Transverse colon (tissue), 4 donors: ENCODE measurements at regions of chr1 and their contacts with region 1.

Region 1: GRCh38 chr1:84763912-84764663 is 73.8 kb upstream of the SSX2IP start:
- DNase-seq: no peak
- H3K4me3 ChIP-seq: no peak overlapping the region
- H3K27ac ChIP-seq: no peak overlapping the region
- H3K4me1 ChIP-seq: peaks cover 0 to 3% (median 0%) of the 10 kb centered on the region in 4 donors
- H3K27me3 ChIP-seq: no peaks in the 10 kb centered on the region
- CTCF ChIP-seq: no peak
- EP300 ChIP-seq: no peak
- POLR2A ChIP-seq: no peak

Region 2: GRCh38 chr1:84450910-84451309 is 313.2 kb before region 1 on chr1:
- in situ Hi-C with region 1: loop called in 3 of 4 experiments (anchors 10 to 25 kb)
- intact Hi-C with region 1: no loop called
- DNase-seq: no peak
- H3K4me3 ChIP-seq: no peak overlapping the region
- H3K27ac ChIP-seq: no peak overlapping the region
- H3K4me1 ChIP-seq: no peaks in the 10 kb centered on the region
- H3K27me3 ChIP-seq: no peaks in the 10 kb centered on the region
- CTCF ChIP-seq: no peak
- EP300 ChIP-seq: no peak
- POLR2A ChIP-seq: no peak

Region 3: DNA sequence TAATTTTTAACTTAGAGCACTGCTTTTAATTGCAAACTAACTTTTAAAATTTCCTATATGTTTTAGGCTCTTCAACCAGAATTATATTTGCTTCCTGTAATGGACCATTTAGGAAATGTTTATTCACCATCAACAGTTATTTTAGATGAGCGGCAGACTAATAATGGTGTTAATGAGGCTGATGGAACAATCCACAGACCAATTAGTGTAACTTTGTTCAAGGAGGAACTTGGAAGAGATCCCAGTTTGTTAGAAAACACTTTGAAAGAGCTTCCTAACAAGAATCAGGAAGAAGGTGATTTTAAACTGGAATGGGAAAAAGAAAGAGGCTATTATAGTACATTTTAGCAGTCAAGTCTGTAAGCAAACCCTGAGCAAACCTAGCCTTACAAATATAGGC is 238.3 kb before region 1 on chr1:
- in situ Hi-C with region 1: no loop called
- intact Hi-C with region 1: no loop called
- DNase-seq: no peak
- H3K4me3 ChIP-seq: no peak overlapping the region
- H3K27ac ChIP-seq: no peak overlapping the region
- H3K4me1 ChIP-seq: no peaks in the 10 kb centered on the region
- H3K27me3 ChIP-seq: no peaks in the 10 kb centered on the region
- CTCF ChIP-seq: no peak
- EP300 ChIP-seq: no peak
- POLR2A ChIP-seq: no peak